PC-9 (cell line): ENCODE measurements at regions of chr1 and their contacts with region 1.

Region 1: DNA sequence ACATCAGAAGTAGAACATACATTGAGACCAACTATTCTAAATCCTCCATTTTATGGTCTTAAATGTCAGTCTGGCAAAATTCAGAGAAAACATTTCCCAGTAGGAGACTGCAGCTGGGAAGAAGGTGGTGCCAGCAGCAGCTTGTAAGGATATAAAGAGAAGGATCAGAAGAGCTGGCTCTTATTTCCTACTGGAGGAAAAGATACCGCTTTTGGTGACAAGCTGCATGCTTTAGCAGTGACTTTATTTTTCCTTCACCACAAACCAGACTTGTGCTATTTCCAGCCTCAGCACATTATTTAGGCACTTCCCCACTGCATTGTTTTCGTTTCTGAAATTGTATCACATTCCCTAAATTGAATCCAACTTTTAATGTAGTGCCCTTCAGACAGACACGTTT is 28.4 kb downstream of the RNF11 start:
- DNase-seq: peak; percentile 35 to 49
- H3K4me3 ChIP-seq: no peak overlapping the region
- H3K27ac ChIP-seq: no peak overlapping the region
- H3K4me1 ChIP-seq: peaks cover 44% of the 10 kb centered on the region
- H3K27me3 ChIP-seq: no peaks in the 10 kb centered on the region
- CTCF ChIP-seq: no peak

Region 2: GRCh38 chr1:50836117-50836516 is 428.3 kb before region 1 on chr1:
- CTCF ChIA-PET with region 1: interaction called, 10 read pairs
- POLR2A ChIA-PET with region 1: no interaction called
- intact Hi-C with region 1: no loop called
- DNase-seq: no peak
- H3K4me3 ChIP-seq: no peak overlapping the region
- H3K27ac ChIP-seq: no peak overlapping the region
- H3K4me1 ChIP-seq: no peaks in the 10 kb centered on the region
- H3K27me3 ChIP-seq: no peaks in the 10 kb centered on the region
- CTCF ChIP-seq: no peak

Region 3: GRCh38 chr1:51247022-51247421 is 17.4 kb before region 1 on chr1:
- CTCF ChIA-PET with region 1: no interaction called
- POLR2A ChIA-PET with region 1: interaction called, 11 read pairs
- intact Hi-C with region 1: no loop called
- DNase-seq: no peak
- H3K4me3 ChIP-seq: no peak overlapping the region
- H3K27ac ChIP-seq: peak overlapping the region; percentile 18; the same call in 1 of the 2 replicates
- H3K4me1 ChIP-seq: peaks cover 7% of the 10 kb centered on the region
- H3K27me3 ChIP-seq: no peaks in the 10 kb centered on the region
- CTCF ChIP-seq: no peak

Region 4: DNA sequence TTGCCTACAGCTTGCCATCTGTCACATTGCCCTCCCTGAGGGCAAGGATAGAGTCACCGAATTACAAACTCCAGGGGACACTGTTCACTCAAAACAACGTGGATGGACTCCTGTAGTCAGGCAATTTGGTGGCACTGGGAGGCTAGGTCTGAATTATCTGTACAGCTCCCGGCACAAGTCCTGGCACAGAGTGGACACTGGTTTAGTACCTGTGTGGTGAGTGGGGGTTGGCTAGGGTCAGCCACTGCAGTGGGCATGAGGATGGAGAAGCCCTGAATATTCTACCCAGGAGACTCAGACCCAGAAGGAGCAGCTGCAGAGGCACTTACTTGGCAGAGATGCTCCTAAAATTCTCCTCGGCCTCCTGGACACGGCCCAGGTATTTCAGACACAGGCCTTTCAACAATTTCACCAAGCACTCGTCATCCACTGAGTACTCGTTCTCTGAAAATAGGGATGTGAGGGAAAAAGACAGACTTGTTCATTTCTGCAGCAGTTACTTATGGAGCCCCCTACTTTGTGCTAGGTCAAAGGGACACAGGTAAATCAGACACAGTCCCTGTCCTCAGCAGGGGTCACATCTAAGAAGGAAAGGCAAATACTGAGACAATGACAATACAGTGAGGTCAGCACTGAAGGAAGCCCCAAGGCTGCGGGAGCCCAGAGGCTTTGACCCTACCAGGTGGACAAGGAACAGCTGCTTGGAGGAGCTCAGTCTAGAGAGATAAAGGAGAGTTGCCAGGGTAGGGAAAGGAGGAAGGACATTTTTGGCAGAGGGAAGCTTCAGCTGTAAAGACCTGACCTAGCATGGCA is 25.4 kb after region 1 on chr1:
- CTCF ChIA-PET with region 1: no interaction called
- POLR2A ChIA-PET with region 1: no interaction called
- intact Hi-C with region 1: no loop called
- DNase-seq: no peak
- H3K4me3 ChIP-seq: no peak overlapping the region
- H3K27ac ChIP-seq: no peak overlapping the region
- H3K4me1 ChIP-seq: no peaks in the 10 kb centered on the region
- H3K27me3 ChIP-seq: no peaks in the 10 kb centered on the region
- CTCF ChIP-seq: no peak

Region 5: DNA sequence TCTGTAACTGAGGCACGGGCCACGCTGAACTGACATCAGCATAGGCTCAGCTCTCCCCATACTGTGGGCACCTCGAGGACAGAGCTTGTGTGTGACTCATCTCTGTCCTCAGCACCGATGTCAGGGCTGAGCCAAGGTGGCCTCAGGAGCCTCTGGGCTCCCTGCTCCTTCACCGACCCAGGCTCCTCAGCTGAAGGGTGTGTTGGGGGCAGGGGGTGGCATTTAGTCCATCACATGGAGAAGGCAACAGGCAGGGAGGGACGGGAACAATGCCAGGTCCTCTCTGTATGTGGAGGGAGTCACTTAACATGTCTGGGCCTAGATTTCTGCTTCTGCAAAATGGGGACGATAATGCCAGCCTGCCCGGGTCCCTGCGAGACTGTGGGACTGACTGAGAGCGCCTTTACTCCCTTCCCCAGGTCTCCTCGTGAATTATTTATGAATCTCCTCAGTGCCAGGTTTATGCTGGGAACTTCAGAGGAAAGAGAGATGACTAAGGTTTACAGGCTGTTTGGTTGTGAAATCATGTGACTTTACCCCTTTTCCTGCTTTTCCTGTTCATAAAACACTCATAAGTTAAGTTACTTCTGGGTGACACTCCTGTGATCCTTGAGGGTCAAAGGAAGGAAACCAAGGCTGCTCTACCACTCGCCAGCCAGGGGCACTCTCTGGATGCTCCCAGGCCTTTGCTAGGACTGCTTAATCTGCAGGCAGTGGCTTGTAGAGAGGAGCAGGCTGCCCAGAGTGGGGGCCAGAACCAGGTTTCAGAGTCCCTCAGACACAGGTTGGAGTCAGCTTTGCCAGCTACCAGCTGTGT is 49.7 kb after region 1 on chr1:
- CTCF ChIA-PET with region 1: no interaction called
- POLR2A ChIA-PET with region 1: interaction called, 21 read pairs
- intact Hi-C with region 1: no loop called
- DNase-seq: peak; percentile 42 to 93
- H3K4me3 ChIP-seq: peak overlapping the region; percentile 22; the same call in 1 of the 2 replicates
- H3K27ac ChIP-seq: peak overlapping the region; percentile 99
- H3K4me1 ChIP-seq: peaks cover 32% of the 10 kb centered on the region
- H3K27me3 ChIP-seq: no peaks in the 10 kb centered on the region
- CTCF ChIP-seq: no peak

Region 6: GRCh38 chr1:51336004-51336403 is 71.6 kb after region 1 on chr1:
- CTCF ChIA-PET with region 1: no interaction called
- POLR2A ChIA-PET with region 1: no interaction called
- intact Hi-C with region 1: no loop called
- DNase-seq: no peak
- H3K4me3 ChIP-seq: no peak overlapping the region
- H3K27ac ChIP-seq: no peak overlapping the region
- H3K4me1 ChIP-seq: peaks cover 19% of the 10 kb centered on the region
- H3K27me3 ChIP-seq: no peaks in the 10 kb centered on the region
- CTCF ChIP-seq: no peak

Region 7: GRCh38 chr1:51359879-51360278 is 95.4 kb after region 1 on chr1:
- CTCF ChIA-PET with region 1: no interaction called
- POLR2A ChIA-PET with region 1: no interaction called
- intact Hi-C with region 1: no loop called
- DNase-seq: no peak
- H3K4me3 ChIP-seq: no peak overlapping the region
- H3K27ac ChIP-seq: no peak overlapping the region
- H3K4me1 ChIP-seq: no peaks in the 10 kb centered on the region
- H3K27me3 ChIP-seq: no peaks in the 10 kb centered on the region
- CTCF ChIP-seq: no peak

Region 8: GRCh38 chr1:51863384-51863783 is 598.9 kb after region 1 on chr1:
- CTCF ChIA-PET with region 1: interaction called, 12 read pairs
- POLR2A ChIA-PET with region 1: no interaction called
- intact Hi-C with region 1: no loop called
- DNase-seq: no peak
- H3K4me3 ChIP-seq: no peak overlapping the region
- H3K27ac ChIP-seq: no peak overlapping the region
- H3K4me1 ChIP-seq: no peaks in the 10 kb centered on the region
- H3K27me3 ChIP-seq: no peaks in the 10 kb centered on the region
- CTCF ChIP-seq: no peak

Region 9: GRCh38 chr1:52159033-52159789 is 894.8 kb after region 1 on chr1:
- CTCF ChIA-PET with region 1: no interaction called
- POLR2A ChIA-PET with region 1: no interaction called
- intact Hi-C with region 1: no loop called
- DNase-seq: peak; percentile 43 to 55
- H3K4me3 ChIP-seq: no peak overlapping the region
- H3K27ac ChIP-seq: 0 out of 2 replicates have a peak overlapping the region, but pooled peaks have one; percentile 5
- H3K4me1 ChIP-seq: peaks cover 9% of the 10 kb centered on the region
- H3K27me3 ChIP-seq: no peaks in the 10 kb centered on the region
- CTCF ChIP-seq: no peak